BJ (cell line): ENCODE measurements at regions of chr1 and their contacts with region 1.

Region 1: DNA sequence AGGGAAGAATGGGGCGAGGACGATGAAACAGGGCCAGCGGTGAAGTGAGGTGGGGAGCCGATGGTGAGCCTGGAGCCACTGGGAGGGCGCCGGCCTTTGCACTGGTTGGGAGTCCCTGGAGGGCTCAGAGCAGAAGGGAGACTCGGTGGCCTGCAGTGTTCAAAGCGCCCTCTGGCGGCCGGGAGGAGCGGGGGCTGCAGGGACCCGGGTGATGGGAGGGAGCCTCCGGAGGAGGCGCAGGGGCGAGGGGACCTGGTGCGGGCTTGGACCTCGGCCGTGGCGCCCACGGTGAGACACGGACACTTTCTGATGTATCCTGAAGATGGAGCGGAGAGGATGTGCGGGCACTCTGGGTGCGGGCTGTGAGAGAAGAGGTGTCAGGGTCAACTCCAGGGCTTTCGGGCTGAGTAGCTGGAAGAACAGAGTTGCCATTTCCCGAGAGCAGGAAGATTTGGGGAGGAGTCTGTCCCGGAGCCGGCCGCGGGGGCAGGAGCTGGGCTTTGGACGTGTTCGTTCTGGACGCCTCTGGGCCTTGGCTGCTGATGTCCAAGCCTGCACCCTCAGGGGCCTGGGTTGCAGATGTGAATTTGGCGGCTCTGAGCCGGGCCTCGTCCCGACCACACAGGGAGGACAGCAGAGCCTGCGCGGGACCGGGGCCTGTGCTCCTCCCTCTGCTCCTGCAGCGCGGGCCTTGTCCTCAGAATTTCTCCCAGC is 29.7 kb downstream of the HEYL start:
- DNase-seq: no peak
- H3K4me3 ChIP-seq: no peak overlapping the region
- H3K27me3 ChIP-seq: no peaks in the 10 kb centered on the region; the same call in 1 of the 2 replicates
- CTCF ChIP-seq: peak; percentile 68

Region 2: DNA sequence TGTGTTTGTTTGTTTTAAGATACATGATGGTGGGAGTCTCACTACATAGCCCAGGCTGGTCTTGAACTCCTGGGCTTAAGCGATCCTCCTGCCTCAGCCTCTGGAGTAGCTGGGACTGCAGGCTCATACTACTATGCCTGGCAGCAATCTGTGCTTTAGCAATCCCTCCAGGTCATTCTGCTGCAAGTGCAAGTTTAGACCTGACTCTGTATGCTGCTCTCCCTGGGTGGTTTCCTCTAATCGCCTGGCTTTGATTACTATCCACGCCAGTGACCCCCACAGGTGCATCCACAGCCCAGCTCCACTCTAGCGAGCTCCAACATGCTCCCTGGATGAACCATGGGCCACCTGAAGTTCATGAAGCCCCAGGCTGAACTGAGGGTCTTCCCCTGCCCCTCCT is 17.7 kb before region 1 on chr1:
- CTCF ChIA-PET with region 1: interaction called, 15 read pairs
- POLR2A ChIA-PET with region 1: no interaction called
- DNase-seq: no peak
- H3K4me3 ChIP-seq: no peak overlapping the region
- H3K27me3 ChIP-seq: peaks cover 19% of the 10 kb centered on the region
- CTCF ChIP-seq: no peak

Region 3: GRCh38 chr1:39632682-39633417 is 23.1 kb after region 1 on chr1:
- CTCF ChIA-PET with region 1: interaction called, 10 read pairs
- POLR2A ChIA-PET with region 1: no interaction called
- DNase-seq: peak; percentile 8
- H3K4me3 ChIP-seq: no peak overlapping the region
- H3K27me3 ChIP-seq: peaks cover 7% of the 10 kb centered on the region
- CTCF ChIP-seq: no peak

Region 4: DNA sequence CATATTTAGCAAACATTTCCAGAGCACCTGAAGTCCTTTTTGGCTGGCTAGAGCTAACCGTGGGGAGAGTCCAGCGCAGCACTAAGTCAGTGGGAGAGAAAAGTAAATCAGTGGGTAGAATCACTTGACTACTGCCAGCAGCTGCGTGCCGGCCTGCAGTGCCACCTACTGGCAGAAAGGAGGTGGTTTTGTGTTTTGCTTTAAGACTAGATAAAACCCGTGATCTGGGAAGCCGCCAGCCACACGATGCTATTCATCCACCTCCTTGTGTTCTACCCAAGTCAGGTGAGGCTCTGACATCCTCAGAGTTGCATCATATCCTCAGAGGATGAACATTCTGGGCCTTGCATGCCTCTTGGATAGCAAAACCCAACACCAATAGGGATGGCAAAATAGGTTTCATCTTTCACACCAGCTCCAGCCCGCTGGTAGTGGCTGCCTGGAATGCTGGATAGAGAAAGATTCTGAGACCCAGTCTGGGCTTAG is 43.8 kb after region 1 on chr1:
- CTCF ChIA-PET with region 1: interaction called, 448 read pairs
- POLR2A ChIA-PET with region 1: no interaction called
- DNase-seq: peak; percentile 20
- H3K4me3 ChIP-seq: no peak overlapping the region
- H3K27me3 ChIP-seq: peaks cover 6% of the 10 kb centered on the region
- CTCF ChIP-seq: peak; percentile 92

Region 5: GRCh38 chr1:39672551-39672947 is 62.8 kb after region 1 on chr1:
- CTCF ChIA-PET with region 1: interaction called, 17 read pairs
- POLR2A ChIA-PET with region 1: no interaction called
- DNase-seq: no peak
- H3K4me3 ChIP-seq: no peak overlapping the region
- H3K27me3 ChIP-seq: peaks cover 46% of the 10 kb centered on the region
- CTCF ChIP-seq: peak; percentile 49

Region 6: DNA sequence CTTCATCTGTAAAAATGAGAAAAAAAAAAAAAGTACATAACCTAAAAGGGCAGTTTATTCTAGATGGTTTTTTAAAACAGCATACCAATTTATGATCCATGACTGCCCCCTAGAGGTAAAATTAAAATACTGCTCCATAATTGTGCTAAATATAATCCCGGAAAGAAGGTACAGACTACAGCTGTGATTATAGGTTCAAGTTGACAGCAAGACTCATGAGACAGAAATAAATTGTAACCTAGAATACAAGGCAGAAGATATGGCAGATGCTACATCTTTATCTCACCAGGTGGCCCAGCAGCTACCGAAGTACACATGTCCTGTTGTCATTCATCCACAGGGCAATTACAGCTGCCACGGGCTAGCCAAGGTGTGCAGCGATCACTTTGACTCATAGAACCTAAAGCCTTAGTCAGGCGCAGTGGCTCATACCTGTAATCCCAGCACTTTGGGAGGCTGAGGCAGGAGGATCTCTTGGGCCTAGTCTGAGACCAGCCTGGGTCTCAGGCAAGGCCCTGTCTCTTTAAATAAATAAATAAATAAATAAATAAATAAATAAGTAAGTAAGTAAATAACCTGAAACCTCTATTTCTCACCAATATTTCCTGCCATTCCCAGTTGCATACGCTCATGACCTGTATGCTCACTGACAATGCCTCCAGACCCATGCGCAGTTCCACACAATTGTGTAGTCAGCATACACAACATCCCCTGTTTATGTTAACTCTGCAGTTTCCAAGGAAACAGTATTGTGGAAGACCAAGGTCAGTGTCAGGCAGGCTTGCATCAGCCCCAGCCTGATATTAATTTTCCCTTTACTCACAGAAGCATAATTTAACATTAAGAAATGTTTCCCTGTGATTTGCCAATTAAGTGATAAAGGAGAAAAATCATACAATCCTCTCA is 110.6 kb after region 1 on chr1:
- CTCF ChIA-PET with region 1: interaction called, 13 read pairs
- POLR2A ChIA-PET with region 1: no interaction called
- DNase-seq: peak; percentile 14
- H3K4me3 ChIP-seq: no peak overlapping the region
- H3K27me3 ChIP-seq: peaks cover 23% of the 10 kb centered on the region
- CTCF ChIP-seq: peak; percentile 49